Head of caudate nucleus (tissue), 42 donors: ENCODE measurements at regions of chr2 and their contacts with region 1.

Region 1: GRCh38 chr2:173210270-173211196 is 134.9 kb downstream of the MAP3K20 start:
- DNase-seq: peak in 41 of 42 donors; percentile 13 to 87 (median 61)

Region 2: DNA sequence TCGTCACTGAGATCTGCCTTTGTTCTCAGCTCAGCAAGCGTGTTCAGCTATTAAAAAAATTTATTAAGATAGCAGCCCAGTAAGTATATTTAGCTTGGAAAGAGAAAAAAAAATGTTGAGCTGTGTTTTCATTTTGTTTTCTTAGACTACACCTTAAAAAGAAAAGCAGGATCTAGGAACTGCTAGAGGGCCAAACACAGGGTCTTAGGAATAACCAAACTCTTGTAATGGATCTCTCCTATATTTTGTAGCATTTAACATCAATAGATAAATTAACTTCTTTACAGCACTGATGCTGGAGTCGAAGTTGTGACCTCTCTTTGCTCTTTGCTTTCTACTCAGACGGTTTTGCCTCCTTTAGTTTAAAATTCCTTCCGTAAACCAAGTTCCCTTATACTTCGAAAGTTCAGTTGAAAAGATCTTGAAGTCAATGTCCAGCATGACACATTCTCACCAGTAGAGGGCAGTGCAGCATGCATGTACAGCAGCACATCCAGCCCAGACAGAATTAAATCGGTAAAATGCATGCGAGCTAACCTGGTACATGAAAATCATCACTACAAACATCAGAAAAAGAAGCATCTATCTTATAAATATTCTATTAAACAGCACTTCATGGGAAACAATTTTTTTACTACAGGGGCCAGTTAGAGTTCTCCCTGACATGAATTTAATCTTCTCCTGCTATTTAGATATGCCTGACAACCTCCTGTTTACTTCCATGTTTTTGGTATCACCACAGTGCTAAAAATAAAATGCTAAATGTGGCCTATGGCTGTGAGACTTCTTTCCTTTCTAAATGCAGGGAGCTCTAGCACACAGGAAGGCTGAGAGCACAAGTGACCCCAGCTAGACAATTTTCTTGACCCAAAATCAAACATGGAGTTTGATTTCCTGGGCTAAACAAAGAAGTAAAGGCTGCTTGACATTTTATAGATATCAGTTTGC is 183.1 kb before region 1 on chr2:
- intact Hi-C with region 1: loop called (anchors 5 kb)
- DNase-seq: peak; percentile 39 to 95 (median 86)